Natural killer cell (primary cell): ENCODE measurements at regions of chr4 and their contacts with region 1.

Region 1: DNA sequence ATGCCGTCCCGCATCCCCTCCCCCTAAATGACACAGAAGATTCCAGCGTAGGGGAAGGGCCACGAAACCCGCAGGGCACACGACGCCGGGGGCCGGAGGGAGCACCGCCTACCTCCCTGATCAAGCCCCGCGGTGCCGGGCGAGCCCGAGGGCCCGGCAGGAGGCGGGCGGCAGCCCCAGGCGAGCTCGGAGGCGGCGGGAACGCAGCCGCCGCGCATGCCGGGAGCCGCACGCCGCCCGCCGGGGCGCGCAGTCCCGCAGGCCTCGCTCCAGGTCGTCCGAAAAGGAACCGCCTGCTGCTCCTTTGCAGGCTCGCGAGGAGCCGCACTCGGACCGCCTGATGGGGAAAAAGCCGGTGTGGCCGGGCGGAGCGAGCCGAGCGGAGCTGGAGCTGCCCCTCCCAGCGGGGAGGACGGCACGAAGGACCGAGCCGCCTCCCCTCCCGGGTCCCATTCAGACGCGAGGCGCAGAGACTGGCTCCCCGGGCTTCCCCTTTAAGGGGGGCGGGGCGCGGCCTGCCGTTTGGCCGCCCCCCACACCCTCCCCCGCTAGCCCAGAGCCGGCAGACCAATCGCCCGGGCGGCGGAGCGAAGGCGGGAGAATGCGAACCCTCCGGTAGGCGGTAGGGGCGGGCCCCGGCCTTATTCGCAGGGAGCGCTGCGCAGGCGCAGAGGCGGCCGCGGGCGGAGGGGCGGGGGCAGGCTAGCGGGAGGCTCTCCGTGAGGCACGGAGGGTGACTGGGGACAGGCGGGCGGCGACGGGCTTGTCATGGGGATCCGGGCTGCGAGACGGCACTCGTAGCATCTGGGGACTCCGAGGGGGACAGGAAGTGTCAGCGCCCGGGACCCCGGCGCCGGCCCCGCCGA is 561 bp upstream of the ING2 start:
- DNase-seq: peak; percentile 98 to 100
- ATAC-seq: peak; percentile 79 to 95 (median 84)
- H3K4me3 ChIP-seq: peak overlapping the region; percentile 85
- H3K4me3 Mint-ChIP-seq: peak overlapping the region; percentile 93
- H3K27ac ChIP-seq: peak overlapping the region; percentile 90
- H3K27ac Mint-ChIP-seq: peak overlapping the region; percentile 88 to 92
- H3K4me1 ChIP-seq: peaks cover 3% of the 10 kb centered on the region
- H3K4me1 Mint-ChIP-seq: peaks cover 13 to 20% of the 10 kb centered on the region in 2 donors
- H3K27me3 ChIP-seq: no peaks in the 10 kb centered on the region
- H3K27me3 Mint-ChIP-seq: no peaks in the 10 kb centered on the region
- CTCF ChIP-seq: no peak

Region 2: DNA sequence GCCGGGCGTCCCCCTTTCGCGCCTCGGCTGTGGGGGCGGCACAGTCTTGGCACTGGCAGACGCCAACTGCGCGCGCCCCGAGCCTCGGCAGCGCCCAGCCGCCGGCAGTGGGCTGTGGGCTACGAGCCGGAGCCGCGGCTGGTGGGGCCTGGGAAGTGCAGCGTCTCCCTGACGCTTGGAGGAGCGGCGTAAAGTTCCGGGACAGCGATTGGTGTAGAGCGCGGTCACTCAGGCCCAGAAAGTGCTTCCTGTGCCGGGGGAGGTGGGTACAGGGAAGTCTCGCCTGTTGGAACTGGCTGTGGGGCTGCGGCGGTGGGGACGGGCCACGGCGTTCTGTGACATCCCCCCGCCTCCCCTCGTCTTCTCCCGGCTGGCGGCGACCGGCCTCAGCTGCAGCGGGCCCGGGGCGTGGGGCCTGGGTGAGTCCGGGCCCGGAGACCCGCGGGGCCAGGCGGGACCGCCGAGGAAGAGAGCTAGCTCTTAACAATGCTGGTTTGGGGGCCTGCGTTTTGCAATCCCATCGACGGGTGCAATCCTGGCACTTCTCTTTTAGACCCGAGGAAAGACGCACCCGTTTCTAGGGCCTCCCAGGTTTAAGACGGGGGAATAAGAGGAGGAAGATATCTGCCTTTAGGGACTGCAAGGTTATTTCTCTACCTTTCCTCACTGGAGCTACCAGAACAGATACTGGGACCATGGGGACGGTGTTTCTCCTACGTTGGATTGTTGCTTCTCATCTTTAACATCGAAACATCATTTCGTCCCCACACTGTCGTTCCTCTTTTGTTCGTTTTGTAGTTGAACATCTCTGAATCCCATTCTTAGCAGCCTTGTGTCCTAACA is 155.0 kb after region 1 on chr4 and contains the starts of genes RWDD4 and TRAPPC11:
- intact Hi-C with region 1: loop called (anchors 1 kb)
- DNase-seq: peak; percentile 95 to 98
- ATAC-seq: peak; percentile 95 to 99 (median 96)
- H3K4me3 ChIP-seq: peak within 1 kb of the TSS; percentile 63
- H3K4me3 Mint-ChIP-seq: peak within 1 kb of the TSS; percentile 87
- H3K27ac ChIP-seq: peak within 1 kb of the TSS; percentile 85
- H3K27ac Mint-ChIP-seq: peak within 1 kb of the TSS; percentile 88 to 89
- H3K4me1 ChIP-seq: peaks cover 15% of the 10 kb centered on the region
- H3K4me1 Mint-ChIP-seq: peaks cover 34 to 37% of the 10 kb centered on the region in 2 donors
- H3K27me3 ChIP-seq: no peaks in the 10 kb centered on the region
- H3K27me3 Mint-ChIP-seq: no peaks in the 10 kb centered on the region
- CTCF ChIP-seq: no peak
- total RNA-seq, gene RWDD4: 14.3 to 20.7 (median 17.6) TPM
- total RNA-seq, gene TRAPPC11: 33.4 to 41.7 (median 36.8) TPM